Adrenal gland (tissue), 19 donors: ENCODE measurements at regions of chr7 and their contacts with region 1.

Region 1: DNA sequence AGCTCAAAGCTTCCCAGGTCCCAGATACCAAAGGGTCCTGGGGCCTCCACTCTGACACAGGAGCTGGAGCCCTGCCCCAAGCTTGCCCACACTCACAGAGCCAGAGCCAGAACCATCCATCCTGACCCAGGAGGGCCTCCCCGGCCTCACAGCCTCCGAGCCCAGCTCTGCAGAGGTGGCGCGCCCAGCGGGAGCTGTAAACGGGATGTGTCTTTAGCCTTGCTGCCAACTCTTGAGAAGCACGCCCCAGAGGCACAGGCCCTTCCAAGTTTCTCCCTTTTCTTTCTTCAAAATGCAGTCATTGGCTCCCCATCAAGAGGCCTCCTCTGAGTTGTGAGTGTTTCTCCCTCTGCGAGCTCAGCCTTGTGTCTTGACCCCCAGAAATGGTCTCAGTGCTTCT is 75.0 kb downstream of the PDGFA start:
- DNase-seq: no peak
- H3K4me3 ChIP-seq: no peak overlapping the region
- H3K27ac ChIP-seq: no peak overlapping the region
- H3K4me1 ChIP-seq: no peaks in the 10 kb centered on the region
- H3K27me3 ChIP-seq: no peaks in the 10 kb centered on the region
- CTCF ChIP-seq: no peak
- POLR2A ChIP-seq: no peak

Region 2: DNA sequence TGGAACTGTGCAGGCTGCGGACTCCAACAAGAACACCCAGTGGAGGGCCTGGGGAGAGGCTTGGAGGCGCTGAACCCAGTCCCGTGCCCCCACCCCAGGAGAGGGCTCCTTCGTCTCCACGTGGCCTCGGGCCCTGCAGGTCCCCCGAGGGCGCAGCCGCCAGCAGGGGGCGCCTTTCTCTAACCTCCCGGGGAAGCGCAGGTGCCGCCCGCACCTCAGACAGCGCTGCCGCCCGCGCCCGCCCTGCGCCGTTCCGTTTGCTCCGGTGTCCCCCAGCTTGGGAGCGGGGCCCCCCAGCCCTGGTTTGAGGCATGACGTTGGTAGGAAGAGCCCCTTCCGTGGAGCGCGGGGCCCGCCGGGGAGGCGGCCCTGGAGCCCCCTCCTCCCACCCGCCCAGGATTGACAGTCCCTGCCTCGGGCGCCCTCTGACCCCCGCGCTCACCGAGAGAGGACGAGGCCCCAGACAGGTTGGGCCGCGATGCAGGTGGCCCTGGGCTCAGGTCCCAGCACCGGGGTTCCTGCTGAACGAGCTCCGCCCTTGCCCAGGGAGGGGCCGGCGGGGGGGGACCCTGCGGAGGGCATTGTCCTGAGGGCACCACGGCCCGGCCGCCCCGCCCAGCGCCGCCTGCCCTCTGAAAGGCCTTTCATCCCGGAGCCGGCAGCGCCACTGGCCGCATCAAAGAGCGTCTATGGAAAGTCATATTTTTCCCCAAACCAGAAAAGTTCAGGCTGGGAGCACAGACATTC is 111.8 kb before region 1 on chr7:
- intact Hi-C with region 1: loop called in 1 of 2 experiments (anchors 10 kb)
- DNase-seq: peak; percentile 46 to 79 (median 77)
- H3K4me3 ChIP-seq: peak overlapping the region in 2 of 4 donors; percentile 3 to 39
- H3K27ac ChIP-seq: peak overlapping the region in 1 of 5 donors; percentile 63
- H3K4me1 ChIP-seq: peaks cover 11 to 12% of the 10 kb centered on the region in 2 donors
- H3K27me3 ChIP-seq: peaks cover 12% of the 10 kb centered on the region
- CTCF ChIP-seq: peak; percentile 45 to 88 (median 79)
- POLR2A ChIP-seq: no peak

Region 3: GRCh38 chr7:756911-757560 is 312.4 kb after region 1 on chr7:
- intact Hi-C with region 1: no loop called
- DNase-seq: no peak
- H3K4me3 ChIP-seq: no peak overlapping the region
- H3K27ac ChIP-seq: no peak overlapping the region
- H3K4me1 ChIP-seq: no peaks in the 10 kb centered on the region
- H3K27me3 ChIP-seq: no peaks in the 10 kb centered on the region
- CTCF ChIP-seq: no peak
- POLR2A ChIP-seq: no peak